Mammary epithelial cell (primary cell): ENCODE measurements at regions of chr9 and their contacts with region 1.

Region 1: DNA sequence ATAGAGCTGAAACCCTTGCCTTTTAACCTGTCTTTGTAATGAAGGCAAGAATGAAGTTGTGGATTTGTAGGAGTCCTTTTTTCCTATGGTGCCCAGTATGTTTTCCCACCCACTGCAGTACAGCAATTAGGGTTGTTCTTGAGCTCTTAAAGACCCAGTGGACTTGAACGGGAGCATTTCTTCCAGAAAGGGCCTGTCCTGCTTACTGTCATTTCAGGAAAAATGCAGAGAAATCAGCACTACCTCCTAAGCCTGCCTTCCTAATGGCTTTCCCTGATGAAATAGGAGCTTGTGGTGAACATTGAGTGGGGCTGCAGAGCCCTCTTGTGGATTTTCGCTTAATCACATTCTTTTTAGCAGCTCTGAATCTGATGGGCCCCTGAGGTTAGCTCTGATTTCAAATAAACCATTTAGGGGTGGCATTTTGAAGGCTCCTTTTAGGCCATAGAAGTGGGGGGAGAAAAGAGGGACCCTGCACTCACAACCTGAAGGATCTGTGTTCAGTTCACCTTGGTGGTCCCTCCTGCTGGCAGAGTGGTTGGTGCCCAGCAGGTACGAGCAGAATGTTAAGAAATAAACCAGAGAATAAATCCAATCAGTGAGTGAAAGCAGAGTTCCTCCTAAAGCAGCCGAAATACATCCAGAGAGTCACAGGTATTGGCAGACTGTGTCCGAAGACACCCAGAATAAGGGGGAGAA is 188.0 kb upstream of the KLF9 start:
- DNase-seq: peak; percentile 64
- H3K4me3 ChIP-seq: no peak overlapping the region
- H3K27ac ChIP-seq: no peak overlapping the region
- H3K4me1 ChIP-seq: peaks cover 17% of the 10 kb centered on the region
- H3K27me3 ChIP-seq: no peaks in the 10 kb centered on the region
- CTCF ChIP-seq: peak; percentile 71 to 80

Region 2: DNA sequence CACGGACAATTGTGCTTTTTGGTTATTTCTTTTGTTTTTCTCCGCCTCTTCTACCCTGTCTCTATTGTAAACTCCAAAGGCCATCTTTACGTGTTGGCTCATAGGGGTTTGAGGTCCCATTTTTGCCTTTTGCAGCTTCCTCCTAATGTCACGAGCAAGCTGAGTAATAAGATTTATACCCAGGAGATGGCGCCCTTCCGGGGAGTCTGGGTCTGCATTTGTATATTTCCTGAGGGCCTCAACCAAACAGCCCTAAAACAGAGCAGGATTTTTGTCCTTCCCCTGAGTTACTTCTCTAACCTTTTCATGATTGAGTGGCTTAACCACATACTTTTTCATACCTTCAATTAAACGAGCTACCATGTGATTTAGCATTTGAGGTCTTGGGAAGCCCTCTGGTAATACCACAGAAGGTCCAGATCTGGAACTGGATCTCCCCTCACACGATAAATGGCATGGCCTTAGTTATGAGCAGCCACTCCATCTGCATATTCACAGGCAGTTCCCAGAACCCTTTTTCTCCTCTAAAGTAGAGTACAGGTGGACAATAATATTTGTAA is 793.1 kb before region 1 on chr9:
- CTCF ChIA-PET with region 1: no interaction called
- dilution Hi-C with region 1: no loop called
- in situ Hi-C with region 1: no loop called
- intact Hi-C with region 1: loop called (anchors 2 kb)
- DNase-seq: peak; percentile 17
- H3K4me3 ChIP-seq: no peak overlapping the region
- H3K27ac ChIP-seq: no peak overlapping the region
- H3K4me1 ChIP-seq: no peaks in the 10 kb centered on the region
- H3K27me3 ChIP-seq: no peaks in the 10 kb centered on the region
- CTCF ChIP-seq: peak; percentile 38 to 41

Region 3: DNA sequence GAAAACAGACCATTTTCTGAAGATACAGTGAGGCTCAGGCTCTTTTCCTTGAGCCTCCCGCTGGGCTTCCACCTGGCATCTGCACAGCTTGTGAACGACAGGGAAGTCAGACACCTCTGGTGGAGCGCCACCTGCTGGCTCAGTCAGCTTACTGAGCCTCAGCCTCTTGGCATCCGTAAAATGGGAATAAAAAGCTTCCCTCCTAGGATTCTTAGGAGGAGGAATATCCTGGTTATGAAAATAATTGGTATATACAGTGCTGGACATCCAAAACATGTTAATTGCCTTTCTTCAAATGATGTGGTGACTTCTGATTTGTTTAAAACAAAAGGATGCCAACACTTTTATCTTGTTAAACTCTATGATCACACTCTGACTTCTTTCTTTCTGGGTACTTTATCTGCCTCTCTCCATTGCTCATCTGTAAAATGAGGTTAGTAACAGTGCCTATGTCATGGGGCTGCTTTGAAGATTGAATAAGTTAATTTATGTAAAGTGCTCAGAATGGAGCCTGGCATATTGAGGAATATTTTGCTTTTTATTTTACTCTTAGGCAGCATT is 491.3 kb before region 1 on chr9:
- CTCF ChIA-PET with region 1: interaction called, 3 read pairs
- dilution Hi-C with region 1: no loop called
- in situ Hi-C with region 1: no loop called
- intact Hi-C with region 1: loop called (anchors 5 kb)
- DNase-seq: peak; percentile 57
- H3K4me3 ChIP-seq: no peak overlapping the region
- H3K27ac ChIP-seq: peak overlapping the region; percentile 58
- H3K4me1 ChIP-seq: peaks cover 56% of the 10 kb centered on the region
- H3K27me3 ChIP-seq: no peaks in the 10 kb centered on the region
- CTCF ChIP-seq: peak; percentile 89 to 91

Region 4: DNA sequence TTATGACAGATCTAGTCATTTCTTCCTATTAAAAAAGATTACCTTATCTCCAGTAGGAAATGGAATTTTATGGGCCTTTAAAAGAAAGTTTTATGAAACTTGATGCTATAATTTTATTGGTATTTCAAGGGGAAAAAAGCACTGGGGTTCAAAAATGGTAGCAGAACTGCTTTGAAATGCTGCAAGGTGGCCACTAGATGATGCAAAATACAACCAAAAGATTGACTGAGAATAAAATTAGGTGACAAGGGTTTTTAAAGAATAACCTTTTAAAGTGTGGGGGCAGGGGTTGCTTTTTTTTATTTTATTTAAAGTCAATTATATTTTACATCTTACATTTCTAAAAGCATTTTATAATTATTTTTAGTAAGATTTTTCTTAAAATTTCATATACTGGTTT is 249.7 kb before region 1 on chr9:
- CTCF ChIA-PET with region 1: no interaction called
- dilution Hi-C with region 1: no loop called
- in situ Hi-C with region 1: loop called (anchors 10 to 25 kb)
- intact Hi-C with region 1: loop called (anchors 1 kb)
- DNase-seq: no peak
- H3K4me3 ChIP-seq: no peak overlapping the region
- H3K27ac ChIP-seq: no peak overlapping the region
- H3K4me1 ChIP-seq: no peaks in the 10 kb centered on the region
- H3K27me3 ChIP-seq: no peaks in the 10 kb centered on the region
- CTCF ChIP-seq: peak; percentile 22 to 57

Region 5: DNA sequence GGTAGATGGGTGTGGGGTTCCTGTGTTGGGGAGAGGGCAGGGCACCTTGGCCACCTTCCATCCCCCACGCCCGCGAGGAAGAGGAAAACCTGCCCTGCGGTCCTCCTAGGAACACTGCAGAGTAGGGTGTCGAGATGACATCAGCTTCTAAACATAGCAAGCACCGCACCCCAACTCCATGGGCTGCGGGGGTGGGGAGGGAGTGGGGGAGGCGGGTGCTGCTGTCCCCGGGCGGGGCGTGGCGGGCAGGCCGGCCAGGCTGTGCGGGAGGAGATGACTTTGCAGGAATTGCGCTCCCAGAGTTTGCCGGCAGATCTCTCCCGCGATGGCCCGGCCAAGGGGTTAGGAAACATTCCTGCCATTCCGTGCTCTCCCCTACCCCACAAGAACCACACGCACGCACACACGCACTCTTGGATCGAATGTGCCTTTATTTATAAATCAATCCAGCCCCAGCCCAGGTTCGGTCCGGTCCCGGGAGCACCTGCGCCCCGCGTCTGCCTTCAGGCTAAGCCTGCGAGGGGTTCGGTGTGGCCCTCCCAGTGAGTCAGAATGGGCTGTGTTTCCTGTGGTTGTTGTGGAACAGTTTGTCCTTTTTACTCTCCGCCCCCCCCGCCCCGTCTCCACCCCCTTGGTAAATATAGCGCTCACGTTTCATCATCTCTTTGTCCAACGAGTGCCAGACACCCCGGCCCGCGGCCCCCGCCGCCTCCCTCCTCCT is 182.8 kb before region 1 on chr9:
- CTCF ChIA-PET with region 1: no interaction called
- dilution Hi-C with region 1: no loop called
- in situ Hi-C with region 1: no loop called
- intact Hi-C with region 1: loop called (anchors 1 kb)
- DNase-seq: peak; percentile 93
- H3K4me3 ChIP-seq: peak overlapping the region; percentile 26 to 54 (median 44)
- H3K27ac ChIP-seq: peak overlapping the region; percentile 87
- H3K4me1 ChIP-seq: peaks cover 25% of the 10 kb centered on the region
- H3K27me3 ChIP-seq: no peaks in the 10 kb centered on the region
- CTCF ChIP-seq: peak in 1 of 2 donors; percentile 21

Region 6: GRCh38 chr9:70510157-70510770 is 92.2 kb before region 1 on chr9:
- CTCF ChIA-PET with region 1: interaction called, 4 read pairs
- dilution Hi-C with region 1: no loop called
- in situ Hi-C with region 1: no loop called
- intact Hi-C with region 1: loop called (anchors 2 kb)
- DNase-seq: no peak
- H3K4me3 ChIP-seq: no peak overlapping the region
- H3K27ac ChIP-seq: no peak overlapping the region
- H3K4me1 ChIP-seq: no peaks in the 10 kb centered on the region
- H3K27me3 ChIP-seq: no peaks in the 10 kb centered on the region
- CTCF ChIP-seq: peak; percentile 67 to 73

Region 7: GRCh38 chr9:70701163-70701562 is 98.7 kb after region 1 on chr9:
- CTCF ChIA-PET with region 1: no interaction called
- dilution Hi-C with region 1: no loop called
- in situ Hi-C with region 1: no loop called
- intact Hi-C with region 1: no loop called
- DNase-seq: no peak
- H3K4me3 ChIP-seq: no peak overlapping the region
- H3K27ac ChIP-seq: no peak overlapping the region
- H3K4me1 ChIP-seq: no peaks in the 10 kb centered on the region
- H3K27me3 ChIP-seq: no peaks in the 10 kb centered on the region
- CTCF ChIP-seq: no peak